Activated CD8-positive, alpha-beta T cell treated with anti-CD3 and anti-CD28 coated beads for 36 hours (primary cell): ENCODE measurements at regions of chr11 and their contacts with region 1.

Region 1: GRCh38 chr11:62645956-62646824 is at the start of gene GANAB:
- DNase-seq: peak; percentile 100
- ATAC-seq: peak; percentile 98
- H3K4me3 Mint-ChIP-seq: peak within 1 kb of the TSS; percentile 100
- H3K27ac Mint-ChIP-seq: peak within 1 kb of the TSS; percentile 99
- H3K4me1 Mint-ChIP-seq: peaks cover 30% of the 10 kb centered on the region
- H3K27me3 Mint-ChIP-seq: no peaks in the 10 kb centered on the region
- CTCF ChIP-seq: no peak
- total RNA-seq, gene GANAB: 205 to 217 TPM

Region 2: DNA sequence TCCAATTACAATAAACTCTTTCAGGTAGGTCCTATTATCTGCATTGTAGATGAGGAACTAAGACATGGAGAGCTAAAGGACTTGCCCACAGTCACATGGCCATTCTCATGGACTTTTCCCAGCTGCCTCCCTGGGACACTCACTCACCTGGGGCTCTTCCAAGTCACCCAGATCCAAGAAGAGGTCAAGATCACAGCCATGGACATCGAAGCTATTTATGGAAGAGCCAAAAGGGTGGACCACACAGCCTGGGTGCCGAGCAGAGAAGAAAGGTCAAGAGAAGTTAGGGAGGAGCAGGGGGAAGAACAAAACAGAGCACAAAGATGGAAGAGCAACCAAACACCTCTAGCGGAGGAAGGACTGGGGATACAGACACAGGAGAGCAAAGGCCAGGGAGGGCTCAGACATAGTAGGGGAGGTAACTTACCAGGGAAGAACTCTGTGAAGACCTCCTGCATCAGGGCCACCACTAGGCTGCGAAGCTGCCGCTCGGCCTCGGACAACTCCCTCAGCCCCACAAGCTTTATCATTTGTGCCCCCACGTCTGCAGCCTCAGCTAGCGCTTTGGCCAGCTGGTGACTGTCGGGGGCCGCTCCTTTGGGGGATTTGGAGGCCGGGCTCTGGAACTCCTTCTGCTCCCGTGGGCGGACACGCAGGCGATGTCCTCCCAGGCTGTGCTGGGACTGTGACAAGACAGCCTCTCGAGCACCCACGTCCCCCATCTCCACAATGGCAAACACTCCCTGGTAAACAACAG is 65.1 kb before region 1 on chr11:
- CTCF ChIA-PET with region 1: no interaction called
- POLR2A ChIA-PET with region 1: no interaction called
- intact Hi-C with region 1: no loop called
- DNase-seq: no peak
- ATAC-seq: no peak
- H3K4me3 Mint-ChIP-seq: no peak overlapping the region
- H3K27ac Mint-ChIP-seq: no peak overlapping the region
- H3K4me1 Mint-ChIP-seq: peaks cover 4% of the 10 kb centered on the region
- H3K27me3 Mint-ChIP-seq: no peaks in the 10 kb centered on the region
- CTCF ChIP-seq: no peak

Region 3: DNA sequence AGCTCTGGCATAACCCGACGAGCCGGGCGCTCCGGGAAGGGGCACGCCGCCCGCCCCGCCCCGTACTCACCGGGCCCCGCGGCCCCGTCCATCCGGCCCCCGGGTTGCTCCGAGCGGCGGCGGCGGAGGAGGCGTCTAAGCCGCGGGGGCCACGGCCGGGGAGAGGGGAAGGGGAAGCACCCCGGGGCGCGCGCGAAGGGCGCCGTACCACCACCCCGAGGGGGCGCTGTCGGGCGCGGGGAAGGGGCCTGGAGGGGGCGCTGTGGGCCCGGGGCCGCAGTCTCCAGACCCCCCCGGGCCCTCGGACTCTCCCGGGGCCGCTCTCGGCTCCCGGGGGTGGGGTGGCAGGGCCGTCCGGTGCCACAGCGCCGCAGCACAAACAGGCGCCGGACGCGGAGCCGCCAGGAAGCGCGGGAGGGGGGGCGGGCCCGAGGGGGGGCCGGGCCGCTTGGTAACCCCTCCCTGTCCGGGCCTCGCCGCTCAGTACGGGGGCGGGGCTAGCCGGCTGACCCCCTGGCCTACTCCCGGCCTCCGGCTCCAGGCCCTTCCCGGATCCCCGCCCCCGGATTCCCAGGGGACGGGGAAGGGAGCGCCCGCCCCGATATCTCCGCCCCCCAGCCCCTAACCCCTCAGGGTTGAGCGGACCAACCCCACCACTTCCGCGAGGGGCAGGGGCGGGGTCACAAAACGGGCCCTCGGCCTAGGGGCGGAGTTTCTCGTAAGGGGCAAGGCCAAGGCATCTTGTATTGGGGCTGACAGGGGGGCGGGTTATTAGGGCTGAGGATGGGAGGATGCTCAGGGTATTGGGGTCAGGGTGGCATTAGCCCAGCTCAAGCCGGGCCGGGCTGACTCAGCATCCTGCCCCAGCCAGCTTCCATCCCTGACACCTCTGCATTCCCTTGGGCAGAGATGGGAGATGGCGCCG is 33.6 kb before region 1 on chr11 and contains the starts of genes EML3 and ROM1:
- CTCF ChIA-PET with region 1: no interaction called
- POLR2A ChIA-PET with region 1: interaction called, 9 read pairs
- intact Hi-C with region 1: loop called (anchors 5 kb)
- DNase-seq: peak; percentile 92
- ATAC-seq: peak; percentile 80
- H3K4me3 Mint-ChIP-seq: peak within 1 kb of the TSS; percentile 96
- H3K27ac Mint-ChIP-seq: peak within 1 kb of the TSS; percentile 97
- H3K4me1 Mint-ChIP-seq: peaks cover 52% of the 10 kb centered on the region
- H3K27me3 Mint-ChIP-seq: no peaks in the 10 kb centered on the region
- CTCF ChIP-seq: peak; percentile 99
- total RNA-seq, gene EML3: 115 to 120 TPM
- total RNA-seq, gene ROM1: 0.79 to 1.1 TPM

Region 4: GRCh38 chr11:62621567-62622470 is 24.4 kb before region 1 on chr11 and contains the start of gene B3GAT3:
- CTCF ChIA-PET with region 1: interaction called, 4 read pairs
- POLR2A ChIA-PET with region 1: interaction called, 23 read pairs
- intact Hi-C with region 1: no loop called
- DNase-seq: peak; percentile 98
- ATAC-seq: peak; percentile 94
- H3K4me3 Mint-ChIP-seq: peak within 1 kb of the TSS; percentile 88
- H3K27ac Mint-ChIP-seq: peak within 1 kb of the TSS; percentile 91
- H3K4me1 Mint-ChIP-seq: peaks cover 24% of the 10 kb centered on the region
- H3K27me3 Mint-ChIP-seq: no peaks in the 10 kb centered on the region
- CTCF ChIP-seq: no peak
- total RNA-seq, gene B3GAT3: 59.1 to 61.4 TPM

Region 5: GRCh38 chr11:62880803-62881578 is 234.8 kb after region 1 on chr11 and contains the start of gene SLC3A2:
- CTCF ChIA-PET with region 1: no interaction called
- POLR2A ChIA-PET with region 1: no interaction called
- intact Hi-C with region 1: no loop called
- DNase-seq: peak; percentile 91
- ATAC-seq: peak; percentile 76
- H3K4me3 Mint-ChIP-seq: peak within 1 kb of the TSS; percentile 99
- H3K27ac Mint-ChIP-seq: peak within 1 kb of the TSS; percentile 100
- H3K4me1 Mint-ChIP-seq: peaks cover 41% of the 10 kb centered on the region
- H3K27me3 Mint-ChIP-seq: no peaks in the 10 kb centered on the region
- CTCF ChIP-seq: peak; percentile 71
- total RNA-seq, gene SLC3A2: 299 to 315 TPM